Aorta (tissue), 5 donors: ENCODE measurements at regions of chr5 and their contacts with region 1.

Region 1: GRCh38 chr5:11311731-11312130 is 550.7 kb upstream of the DAP start:
- DNase-seq: no peak
- ATAC-seq: no peak
- H3K4me3 ChIP-seq: no peak overlapping the region
- H3K27ac ChIP-seq: no peak overlapping the region
- H3K4me1 ChIP-seq: no peaks in the 10 kb centered on the region
- H3K27me3 ChIP-seq: no peaks in the 10 kb centered on the region

Region 2: DNA sequence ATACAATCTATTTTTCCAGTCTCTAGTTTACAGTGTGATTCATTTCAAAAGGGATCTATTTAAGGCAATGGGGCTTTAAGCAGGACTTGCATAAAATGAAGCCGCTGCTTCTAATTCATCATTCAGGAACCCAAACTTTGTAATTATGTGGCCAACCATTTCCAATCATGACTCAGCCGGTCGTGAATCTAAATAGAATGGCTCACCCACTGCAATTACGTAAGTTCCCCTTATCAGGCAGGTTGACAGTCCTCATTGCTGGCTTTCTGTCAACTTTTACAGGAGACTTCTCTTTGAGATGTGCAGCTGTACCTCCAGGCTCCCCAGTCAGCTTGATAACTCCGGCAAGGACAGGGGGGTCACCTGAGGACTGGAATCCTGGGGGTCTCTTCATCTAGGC is 397.9 kb before region 1 on chr5:
- intact Hi-C with region 1: no loop called
- DNase-seq: no peak
- ATAC-seq: no peak
- H3K4me3 ChIP-seq: no peak overlapping the region
- H3K27ac ChIP-seq: no peak overlapping the region
- H3K4me1 ChIP-seq: no peaks in the 10 kb centered on the region
- H3K27me3 ChIP-seq: peaks cover 0 to 3% of the 10 kb centered on the region in 2 donors

Region 3: GRCh38 chr5:11322133-11322532 is 10.4 kb after region 1 on chr5:
- intact Hi-C with region 1: loop called in 1 of 2 experiments (anchors 2 kb)
- DNase-seq: no peak
- ATAC-seq: peak; percentile 53
- H3K4me3 ChIP-seq: no peak overlapping the region
- H3K27ac ChIP-seq: no peak overlapping the region
- H3K4me1 ChIP-seq: no peaks in the 10 kb centered on the region
- H3K27me3 ChIP-seq: no peaks in the 10 kb centered on the region